Activated T-helper 1 cell treated with anti-CD3 and anti-CD28 coated beads, Interleukin-12 subunit alpha, Interleukin-12 subunit beta, Interleukin-2, Interleukin-4 antibody, amounts not matched to agents 30 ng/mL and 10 ng/mL and 1 ng/mL, durations not matched to agents 14 hours and 24 hours and 36 hours (primary cell): ENCODE measurements at regions of chr13 and their contacts with region 1.

Region 1: GRCh38 chr13:39602614-39603366 is at the start of gene LHFPL6:
- DNase-seq: peak; percentile 67
- H3K4me3 Mint-ChIP-seq: peak within 1 kb of the TSS; percentile 83
- H3K27ac Mint-ChIP-seq: peak within 1 kb of the TSS; percentile 72
- H3K4me1 Mint-ChIP-seq: peaks cover 16% of the 10 kb centered on the region
- H3K27me3 Mint-ChIP-seq: peaks cover 47% of the 10 kb centered on the region
- total RNA-seq, gene LHFPL6: 4.2 and 4.8 TPM in 2 replicates

Region 2: DNA sequence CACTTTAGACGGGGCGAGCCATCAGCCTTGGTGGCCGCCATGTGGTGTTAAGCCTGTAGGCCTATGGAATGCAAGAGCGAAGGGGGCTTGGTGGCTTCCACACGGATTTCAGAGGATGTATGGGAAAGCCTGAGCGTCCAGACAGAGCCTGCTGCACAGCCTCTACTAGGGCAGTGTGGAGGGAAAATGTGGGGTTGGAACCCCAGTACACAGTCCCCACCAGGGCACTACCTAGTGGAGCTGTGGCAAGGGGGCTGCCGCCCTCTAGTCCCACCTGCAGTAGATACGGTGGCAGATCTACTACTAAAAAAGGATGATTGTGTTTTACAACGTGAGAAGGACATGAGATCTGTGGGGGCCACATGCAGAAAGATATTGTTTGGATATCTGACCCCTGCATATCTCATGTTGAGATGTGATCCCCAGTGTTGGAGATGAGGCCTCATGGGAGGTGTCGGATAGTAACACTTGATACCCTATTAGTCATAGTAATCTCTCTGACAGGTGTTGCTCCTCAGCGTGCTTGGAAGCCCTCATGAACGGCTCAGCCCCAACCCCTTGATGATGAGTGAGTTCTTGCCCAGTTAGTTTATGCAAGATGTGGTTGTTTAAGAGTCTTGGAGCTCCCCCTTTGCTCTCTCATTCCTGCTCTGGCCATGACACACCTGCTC is 45.4 kb before region 1 on chr13:
- intact Hi-C with region 1: no loop called
- DNase-seq: no peak
- H3K4me3 Mint-ChIP-seq: no peak overlapping the region
- H3K27ac Mint-ChIP-seq: no peak overlapping the region
- H3K4me1 Mint-ChIP-seq: no peaks in the 10 kb centered on the region
- H3K27me3 Mint-ChIP-seq: peaks cover 2% of the 10 kb centered on the region

Region 3: DNA sequence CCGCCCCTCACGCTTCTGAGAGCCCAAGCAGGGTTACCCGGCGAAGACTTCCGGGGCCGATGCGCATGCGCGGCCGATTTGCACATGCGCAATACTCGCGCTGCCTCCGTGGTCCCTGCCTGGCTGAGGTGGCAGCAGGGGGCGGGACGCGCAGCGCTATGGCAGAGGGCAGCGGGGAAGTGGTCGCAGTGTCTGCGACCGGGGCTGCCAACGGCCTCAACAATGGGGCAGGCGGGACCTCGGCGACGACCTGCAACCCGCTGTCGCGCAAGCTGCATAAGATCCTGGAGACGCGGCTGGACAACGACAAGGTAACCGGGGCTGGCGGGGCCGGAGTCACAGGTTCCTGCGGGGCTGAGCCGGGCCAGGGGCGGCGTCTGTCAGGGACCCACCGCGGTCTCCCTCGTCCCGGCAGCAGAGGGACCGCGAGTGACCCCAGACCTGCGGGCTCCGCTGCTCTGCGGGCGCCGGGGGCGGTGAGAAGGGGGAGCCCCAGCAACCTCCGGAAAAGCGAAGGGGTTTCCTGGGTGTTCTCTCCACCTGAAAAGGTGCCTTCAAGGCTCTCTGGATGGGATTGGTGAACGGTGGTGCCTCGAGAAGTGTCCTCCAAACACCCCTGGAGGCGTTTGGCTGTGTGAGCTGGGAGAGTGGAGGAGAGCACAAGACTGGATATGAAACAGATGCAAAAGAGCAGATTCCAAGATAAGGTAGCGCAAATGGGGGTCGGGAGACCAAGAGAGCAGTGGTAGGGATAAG is 53.0 kb after region 1 on chr13 and contains the start of gene COG6:
- intact Hi-C with region 1: loop called (anchors 2 kb)
- DNase-seq: peak; percentile 91
- H3K4me3 Mint-ChIP-seq: peak within 1 kb of the TSS; percentile 96
- H3K27ac Mint-ChIP-seq: peak within 1 kb of the TSS; percentile 87
- H3K4me1 Mint-ChIP-seq: peaks cover 17% of the 10 kb centered on the region
- H3K27me3 Mint-ChIP-seq: peaks cover 4% of the 10 kb centered on the region
- total RNA-seq, gene COG6: 25.6 and 31.8 TPM in 2 replicates

Region 4: GRCh38 chr13:39712626-39713025 is 109.8 kb after region 1 on chr13:
- intact Hi-C with region 1: no loop called
- DNase-seq: no peak
- H3K4me3 Mint-ChIP-seq: no peak overlapping the region
- H3K27ac Mint-ChIP-seq: no peak overlapping the region
- H3K4me1 Mint-ChIP-seq: no peaks in the 10 kb centered on the region
- H3K27me3 Mint-ChIP-seq: no peaks in the 10 kb centered on the region

Region 5: GRCh38 chr13:40910324-40911050 is 1307.7 kb after region 1 on chr13:
- intact Hi-C with region 1: no loop called
- DNase-seq: no peak
- H3K4me3 Mint-ChIP-seq: no peak overlapping the region
- H3K27ac Mint-ChIP-seq: no peak overlapping the region
- H3K4me1 Mint-ChIP-seq: peaks cover 12% of the 10 kb centered on the region
- H3K27me3 Mint-ChIP-seq: no peaks in the 10 kb centered on the region